ENCODE measurements at regions of chrX and their contacts with region 1.

Region 1: GRCh38 chrX:154397819-154398724 is at the start of gene RPL10:
- DNase-seq: peak; percentile 76
- ATAC-seq: peak; percentile 75
- H3K4me3 Mint-ChIP-seq: peak within 1 kb of the TSS; percentile 97
- H3K27ac Mint-ChIP-seq: peak within 1 kb of the TSS; percentile 99
- H3K4me1 Mint-ChIP-seq: peaks cover 26% of the 10 kb centered on the region
- H3K27me3 Mint-ChIP-seq: no peaks in the 10 kb centered on the region
- CTCF ChIP-seq: no peak
- total RNA-seq, gene RPL10: 5,113 and 5,534 TPM in 2 replicates

Region 2: GRCh38 chrX:154370882-154371770 is 26.9 kb before region 1 on chrX:
- CTCF ChIA-PET with region 1: interaction called, 3 read pairs
- POLR2A ChIA-PET with region 1: interaction called, 65 read pairs
- intact Hi-C with region 1: no loop called
- DNase-seq: peak; percentile 76
- ATAC-seq: peak; percentile 64
- H3K4me3 Mint-ChIP-seq: peak overlapping the region; percentile 84
- H3K27ac Mint-ChIP-seq: peak overlapping the region; percentile 69
- H3K4me1 Mint-ChIP-seq: peaks cover 34% of the 10 kb centered on the region
- H3K27me3 Mint-ChIP-seq: no peaks in the 10 kb centered on the region
- CTCF ChIP-seq: no peak

Region 3: DNA sequence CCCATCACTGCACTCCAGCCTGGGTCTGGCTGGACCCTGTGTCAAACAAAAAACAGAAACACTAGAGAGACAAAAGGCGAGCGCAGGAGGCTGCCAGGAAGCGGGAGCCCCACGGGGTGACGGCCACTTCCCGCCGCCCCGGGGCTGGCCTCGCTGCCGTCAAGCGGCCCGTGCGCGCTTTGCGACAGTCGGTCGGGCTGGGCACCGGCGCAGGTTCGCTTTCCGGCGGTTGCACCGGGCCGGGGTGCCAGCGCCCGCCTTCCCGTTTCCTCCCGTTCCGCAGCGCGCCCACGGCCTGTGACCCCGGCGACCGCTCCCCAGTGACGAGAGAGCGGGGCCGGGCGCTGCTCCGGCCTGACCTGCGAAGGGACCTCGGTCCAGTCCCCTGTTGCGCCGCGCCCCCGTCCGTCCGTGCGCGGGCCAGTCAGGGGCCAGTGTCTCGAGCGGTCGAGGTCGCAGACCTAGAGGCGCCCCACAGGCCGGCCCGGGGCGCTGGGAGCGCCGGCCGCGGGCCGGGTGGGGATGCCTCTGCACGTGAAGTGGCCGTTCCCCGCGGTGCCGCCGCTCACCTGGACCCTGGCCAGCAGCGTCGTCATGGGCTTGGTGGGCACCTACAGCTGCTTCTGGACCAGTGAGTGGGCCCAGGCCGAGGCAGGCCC is 13.4 kb after region 1 on chrX and contains the start of gene TAFAZZIN:
- CTCF ChIA-PET with region 1: interaction called, 4 read pairs
- POLR2A ChIA-PET with region 1: interaction called, 125 read pairs
- intact Hi-C with region 1: loop called (anchors 1 kb)
- DNase-seq: peak; percentile 60
- ATAC-seq: peak; percentile 69
- H3K4me3 Mint-ChIP-seq: peak within 1 kb of the TSS; percentile 88
- H3K27ac Mint-ChIP-seq: peak within 1 kb of the TSS; percentile 87
- H3K4me1 Mint-ChIP-seq: peaks cover 24% of the 10 kb centered on the region
- H3K27me3 Mint-ChIP-seq: no peaks in the 10 kb centered on the region
- CTCF ChIP-seq: no peak
- total RNA-seq, gene TAFAZZIN: 50.5 and 66.1 TPM in 2 replicates

Region 4: GRCh38 chrX:154458114-154458953 is 60.3 kb after region 1 on chrX and contains the start of gene PLXNA3:
- CTCF ChIA-PET with region 1: no interaction called
- POLR2A ChIA-PET with region 1: interaction called, 27 read pairs
- intact Hi-C with region 1: no loop called
- DNase-seq: peak; percentile 75
- ATAC-seq: peak; percentile 84
- H3K4me3 Mint-ChIP-seq: peak within 1 kb of the TSS; percentile 93
- H3K27ac Mint-ChIP-seq: peak within 1 kb of the TSS; percentile 94
- H3K4me1 Mint-ChIP-seq: peaks cover 14% of the 10 kb centered on the region
- H3K27me3 Mint-ChIP-seq: no peaks in the 10 kb centered on the region
- CTCF ChIP-seq: no peak
- total RNA-seq, gene PLXNA3: 58.9 and 69.5 TPM in 2 replicates

Region 5: DNA sequence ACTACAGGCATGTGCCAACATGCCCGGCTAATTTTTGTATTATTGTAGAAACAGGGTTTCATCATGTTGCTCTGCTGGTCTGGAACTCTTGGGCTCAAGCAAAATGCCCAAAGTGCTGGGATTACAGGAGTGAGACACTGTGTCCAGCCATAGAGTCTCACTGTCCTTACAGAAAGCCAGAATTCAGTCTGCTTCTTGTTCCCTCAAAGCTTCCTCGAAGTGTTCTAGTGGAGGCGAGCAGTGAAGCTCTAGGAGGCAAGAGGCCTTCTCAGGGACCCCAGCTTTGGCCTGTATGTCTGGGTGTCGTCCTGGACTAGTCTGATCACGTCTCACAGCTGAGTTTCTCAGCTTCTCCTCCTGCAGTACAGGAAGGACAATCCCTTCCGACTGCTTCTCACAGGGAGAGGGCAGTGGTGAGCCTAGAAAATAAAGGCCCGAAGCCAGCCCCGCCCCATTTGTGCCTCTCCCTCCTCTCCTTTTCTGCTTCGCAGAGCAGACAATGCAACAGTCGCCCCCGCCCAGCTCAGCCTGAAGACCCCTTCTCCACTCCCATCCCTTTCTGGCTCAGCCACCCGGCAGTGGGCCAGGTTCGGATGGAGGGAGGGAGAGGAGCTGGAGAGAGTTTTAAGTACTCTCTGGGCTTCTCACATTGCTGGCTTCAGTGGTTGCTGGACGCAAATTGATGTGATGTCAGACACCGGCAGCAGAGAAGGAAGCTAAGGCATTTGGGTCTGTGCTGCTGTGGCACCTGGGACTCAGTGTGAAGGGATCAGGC is 129.0 kb after region 1 on chrX:
- CTCF ChIA-PET with region 1: interaction called, 6 read pairs
- POLR2A ChIA-PET with region 1: interaction called, 19 read pairs
- intact Hi-C with region 1: loop called (anchors 5 kb)
- DNase-seq: peak; percentile 44
- ATAC-seq: peak; percentile 90
- H3K4me3 Mint-ChIP-seq: peak overlapping the region; percentile 68
- H3K27ac Mint-ChIP-seq: peak overlapping the region; percentile 76
- H3K4me1 Mint-ChIP-seq: peaks cover 14% of the 10 kb centered on the region
- H3K27me3 Mint-ChIP-seq: no peaks in the 10 kb centered on the region
- CTCF ChIP-seq: no peak

Region 6: DNA sequence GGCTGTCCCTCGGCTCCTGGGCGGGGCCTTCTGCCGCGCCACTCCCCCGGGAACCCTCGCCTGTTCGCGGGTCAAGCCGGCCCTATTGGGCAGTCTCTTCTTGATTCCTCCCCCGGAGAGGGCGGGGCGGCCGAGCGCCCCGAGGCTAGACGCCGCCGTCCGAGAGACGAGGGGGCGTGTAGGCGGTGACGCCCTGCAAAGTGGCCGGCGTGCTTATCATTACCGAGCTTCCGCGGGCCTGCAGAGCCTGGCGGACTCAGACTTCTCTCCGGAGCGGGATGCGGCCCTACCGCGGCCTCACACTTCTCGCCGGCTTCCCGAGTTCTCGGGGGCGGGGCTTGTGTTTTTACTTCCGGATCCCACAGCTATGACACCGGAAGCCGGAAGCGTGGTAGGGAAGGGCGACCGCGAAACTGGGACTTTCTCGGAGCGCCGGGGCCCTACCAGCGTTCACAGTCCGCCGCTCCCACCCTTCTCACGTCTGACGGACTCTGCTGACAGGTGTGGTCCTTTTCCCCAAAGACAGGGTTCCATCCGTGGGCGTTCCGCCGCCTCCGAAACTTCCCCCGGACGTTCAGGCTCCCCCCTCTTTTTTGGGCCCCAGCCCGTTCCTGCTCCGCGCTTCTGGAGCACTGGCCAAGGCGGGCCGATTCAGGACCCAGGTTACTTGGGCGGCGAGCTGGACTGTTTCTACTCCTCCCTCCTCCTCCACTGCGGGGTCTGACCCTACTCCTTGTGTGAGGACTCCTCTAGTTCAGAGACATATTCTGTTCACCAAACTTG is 149.4 kb after region 1 on chrX and contains the start of gene IKBKG:
- CTCF ChIA-PET with region 1: no interaction called
- POLR2A ChIA-PET with region 1: interaction called, 20 read pairs
- intact Hi-C with region 1: no loop called
- DNase-seq: peak; percentile 86
- ATAC-seq: peak; percentile 81
- H3K4me3 Mint-ChIP-seq: peak within 1 kb of the TSS; percentile 86
- H3K27ac Mint-ChIP-seq: peak within 1 kb of the TSS; percentile 95
- H3K4me1 Mint-ChIP-seq: peaks cover 45% of the 10 kb centered on the region
- H3K27me3 Mint-ChIP-seq: no peaks in the 10 kb centered on the region
- CTCF ChIP-seq: no peak
- total RNA-seq, gene IKBKG: 52.9 and 61.1 TPM in 2 replicates

Measured in activated B cell treated with CpG ODN at 0.5 μM for 24 hours (primary cell).